Activated CD4-positive, alpha-beta T cell treated with anti-CD3 and anti-CD28 coated beads, Interleukin-2, amount 10 ng/mL, durations not matched to agents 7 days and 5 days (primary cell): ENCODE measurements at regions of chr1 and their contacts with region 1.

Region 1: DNA sequence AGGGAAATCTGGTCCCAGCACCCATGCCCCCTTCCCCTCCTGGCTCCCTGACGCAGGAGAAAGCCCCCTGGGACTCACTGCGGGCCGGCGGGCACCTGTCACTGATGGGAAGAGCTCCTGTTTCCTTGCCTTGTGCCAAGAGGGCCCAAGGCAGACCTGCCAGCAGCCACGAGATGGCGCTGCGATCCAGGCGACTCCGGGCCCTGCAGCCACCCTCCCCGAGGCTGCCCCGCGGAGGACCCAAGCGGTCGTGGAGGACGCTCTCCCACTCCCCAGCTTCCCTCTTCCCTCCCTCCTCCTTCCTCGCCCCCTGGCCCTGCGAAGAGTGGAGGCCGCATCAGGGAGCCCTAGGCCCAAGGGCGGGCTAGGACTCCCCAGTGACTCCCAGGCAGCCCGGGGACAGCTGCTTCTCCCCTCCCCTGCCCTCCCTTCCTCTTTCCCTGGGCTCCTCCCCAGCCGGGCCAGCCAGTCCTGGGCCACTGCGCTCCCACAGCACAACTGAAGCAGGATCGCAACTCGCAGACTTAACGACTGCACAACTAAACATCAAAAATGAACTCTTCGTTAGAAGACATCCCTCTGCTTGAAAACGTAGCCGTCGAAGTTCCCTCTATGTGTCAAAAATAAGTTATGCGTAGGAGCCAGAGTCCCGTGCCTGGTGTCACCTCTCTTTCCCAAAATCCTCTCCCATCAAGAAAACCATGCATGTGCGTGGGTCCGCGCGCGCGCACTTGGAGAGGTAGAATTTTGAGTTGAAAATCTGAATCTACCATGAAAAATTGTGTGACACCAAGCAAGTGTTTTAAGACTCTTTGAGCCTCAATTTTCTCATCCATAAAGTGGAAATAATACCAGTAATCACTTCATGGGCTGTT is 34.2 kb downstream of the BATF3 start:
- DNase-seq: peak; percentile 80
- H3K4me3 Mint-ChIP-seq: peak overlapping the region; percentile 74
- H3K27ac Mint-ChIP-seq: peak overlapping the region; percentile 74
- H3K4me1 Mint-ChIP-seq: peaks cover 22% of the 10 kb centered on the region
- H3K27me3 Mint-ChIP-seq: peaks cover 20% of the 10 kb centered on the region

Region 2: DNA sequence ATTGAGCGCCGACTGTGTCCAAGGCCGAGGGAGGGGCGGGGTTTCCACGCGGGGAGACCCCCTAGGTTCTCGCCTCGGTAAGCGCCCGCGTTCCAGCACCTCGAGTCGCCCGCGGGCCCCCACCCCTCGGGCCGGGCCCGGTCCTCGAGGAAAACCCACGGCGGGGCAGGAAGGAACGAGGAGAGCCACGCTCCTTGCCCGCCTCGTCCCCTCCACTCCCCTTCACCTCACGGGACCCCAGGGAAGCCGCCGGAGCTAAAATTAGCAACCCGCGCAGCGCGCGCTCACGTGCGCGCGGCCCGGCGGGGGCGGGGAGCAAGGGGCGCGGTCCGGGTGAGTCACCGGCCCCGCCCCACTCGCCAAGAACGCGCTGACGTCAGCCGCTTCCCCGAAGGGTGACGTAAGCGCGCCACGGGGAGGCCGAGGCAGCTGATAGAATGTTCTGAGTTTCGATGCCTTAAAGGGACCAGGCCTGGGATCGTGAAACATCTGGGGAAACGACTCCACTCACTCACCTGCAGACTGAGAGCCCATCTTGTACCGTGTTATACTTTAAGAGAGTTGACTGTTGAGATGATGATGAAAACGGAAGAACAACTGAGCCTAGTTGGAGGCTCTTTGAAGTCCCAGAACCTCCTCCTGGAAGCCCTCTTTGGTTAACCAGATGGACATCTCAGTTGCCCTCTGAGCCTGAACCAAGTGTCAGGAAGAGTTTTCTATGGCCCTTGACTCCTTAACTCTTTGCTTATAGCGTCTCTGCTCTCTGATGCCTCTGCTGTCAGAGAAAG is 106.6 kb before region 1 on chr1:
- CTCF ChIA-PET with region 1: no interaction called
- POLR2A ChIA-PET with region 1: no interaction called
- DNase-seq: peak; percentile 94
- H3K4me3 Mint-ChIP-seq: peak overlapping the region; percentile 61
- H3K27ac Mint-ChIP-seq: peak overlapping the region; percentile 92
- H3K4me1 Mint-ChIP-seq: peaks cover 7% of the 10 kb centered on the region
- H3K27me3 Mint-ChIP-seq: peaks cover 32% of the 10 kb centered on the region

Region 3: DNA sequence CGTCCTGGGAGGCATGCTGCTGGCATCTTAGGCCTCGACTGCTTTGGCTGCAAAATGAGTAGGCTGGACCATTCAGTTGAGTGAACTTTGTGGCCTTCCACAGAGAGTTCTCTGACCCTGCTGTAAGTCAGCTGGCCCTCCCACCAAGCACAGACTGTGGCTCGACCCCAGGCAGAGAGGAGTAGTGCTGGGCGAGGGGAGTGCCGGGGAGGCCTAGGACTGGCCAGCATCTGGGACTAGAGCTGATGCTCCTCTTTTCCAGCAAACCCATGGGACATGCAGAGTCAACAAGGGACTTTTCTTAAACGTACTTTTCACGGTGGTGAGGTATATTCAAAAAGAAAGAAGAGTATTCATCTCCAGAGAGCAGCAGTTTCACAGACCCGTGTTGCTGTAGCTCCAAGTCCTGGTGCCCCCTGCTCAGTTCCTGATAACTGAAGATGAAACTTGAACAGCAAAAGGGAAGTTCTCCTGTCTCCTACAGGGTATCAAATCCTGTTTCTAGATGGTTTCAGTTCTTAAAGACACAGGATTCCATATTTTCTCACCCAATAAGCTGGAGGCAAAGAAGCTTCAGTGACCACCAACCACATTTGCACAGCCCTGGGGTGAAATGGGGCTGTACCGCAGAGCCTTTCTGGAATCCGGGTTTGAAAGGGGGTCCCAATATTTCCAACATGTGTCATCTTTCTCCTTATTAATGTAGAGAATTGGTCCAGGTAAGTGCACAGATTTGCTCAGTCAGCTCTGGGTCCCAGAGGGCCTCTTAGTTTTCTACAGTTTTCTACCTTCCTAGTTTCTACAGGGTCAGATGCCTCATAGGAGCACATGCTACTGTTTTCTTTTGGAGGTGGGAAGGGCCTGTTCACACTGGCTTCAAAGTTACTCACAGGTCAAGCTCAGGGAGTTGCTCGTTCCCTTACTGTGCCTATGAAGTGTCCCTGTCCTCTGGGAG is 13.3 kb after region 1 on chr1:
- CTCF ChIA-PET with region 1: interaction called, 45 read pairs
- POLR2A ChIA-PET with region 1: no interaction called
- DNase-seq: no peak
- H3K4me3 Mint-ChIP-seq: no peak overlapping the region
- H3K27ac Mint-ChIP-seq: peak overlapping the region; percentile 46
- H3K4me1 Mint-ChIP-seq: peaks cover 43% of the 10 kb centered on the region
- H3K27me3 Mint-ChIP-seq: peaks cover 4% of the 10 kb centered on the region

Region 4: GRCh38 chr1:212688341-212689047 is 23.0 kb after region 1 on chr1:
- CTCF ChIA-PET with region 1: interaction called, 10 read pairs
- POLR2A ChIA-PET with region 1: no interaction called
- DNase-seq: no peak
- H3K4me3 Mint-ChIP-seq: no peak overlapping the region
- H3K27ac Mint-ChIP-seq: no peak overlapping the region
- H3K4me1 Mint-ChIP-seq: peaks cover 27% of the 10 kb centered on the region
- H3K27me3 Mint-ChIP-seq: no peaks in the 10 kb centered on the region

Region 5: GRCh38 chr1:212743901-212744475 is 78.5 kb after region 1 on chr1:
- CTCF ChIA-PET with region 1: interaction called, 10 read pairs
- POLR2A ChIA-PET with region 1: no interaction called
- DNase-seq: peak; percentile 25
- H3K4me3 Mint-ChIP-seq: no peak overlapping the region
- H3K27ac Mint-ChIP-seq: peak overlapping the region; percentile 72
- H3K4me1 Mint-ChIP-seq: peaks cover 28% of the 10 kb centered on the region
- H3K27me3 Mint-ChIP-seq: no peaks in the 10 kb centered on the region

Region 6: GRCh38 chr1:212749821-212750535 is 84.5 kb after region 1 on chr1:
- CTCF ChIA-PET with region 1: interaction called, 10 read pairs
- POLR2A ChIA-PET with region 1: no interaction called
- DNase-seq: no peak
- H3K4me3 Mint-ChIP-seq: no peak overlapping the region
- H3K27ac Mint-ChIP-seq: no peak overlapping the region
- H3K4me1 Mint-ChIP-seq: peaks cover 42% of the 10 kb centered on the region
- H3K27me3 Mint-ChIP-seq: no peaks in the 10 kb centered on the region

Region 7: GRCh38 chr1:212760126-212760823 is 94.8 kb after region 1 on chr1:
- CTCF ChIA-PET with region 1: interaction called, 15 read pairs
- POLR2A ChIA-PET with region 1: no interaction called
- DNase-seq: peak; percentile 56
- H3K4me3 Mint-ChIP-seq: no peak overlapping the region
- H3K27ac Mint-ChIP-seq: no peak overlapping the region
- H3K4me1 Mint-ChIP-seq: peaks cover 16% of the 10 kb centered on the region
- H3K27me3 Mint-ChIP-seq: no peaks in the 10 kb centered on the region

Region 8: DNA sequence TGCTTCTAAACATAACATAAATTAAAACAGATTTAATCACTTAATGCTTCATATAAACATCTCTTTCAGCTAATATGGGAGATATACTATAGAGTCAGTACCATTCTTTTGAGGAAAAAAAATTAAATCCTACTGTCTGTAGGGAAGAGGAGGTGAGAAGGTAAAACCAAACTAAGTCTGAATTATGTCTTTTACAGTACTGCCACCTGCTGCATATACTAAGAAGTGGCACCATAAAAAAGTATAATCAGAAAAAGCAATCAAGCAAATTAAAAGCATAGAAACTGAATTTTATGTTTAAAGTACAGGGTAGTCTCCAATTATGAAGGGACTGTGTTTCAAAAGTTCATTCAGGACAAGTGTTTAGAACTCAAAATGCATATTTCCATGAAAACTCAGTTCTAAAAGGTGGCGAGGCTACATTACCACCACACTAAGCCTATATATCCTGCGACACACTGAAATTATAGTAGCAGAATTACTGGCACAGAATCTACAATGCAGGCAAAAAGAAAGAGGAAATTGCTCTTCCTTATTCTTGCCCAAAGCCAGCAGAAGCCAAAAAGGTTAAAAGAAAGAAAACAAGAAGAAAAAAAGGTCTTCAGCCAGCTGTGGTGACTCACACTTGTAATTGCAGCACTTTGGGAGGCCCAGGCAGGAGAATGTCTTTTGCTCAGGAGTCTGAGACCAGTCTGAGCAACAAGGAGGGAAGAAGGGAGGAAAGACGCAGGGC is 117.1 kb after region 1 on chr1:
- CTCF ChIA-PET with region 1: interaction called, 19 read pairs
- POLR2A ChIA-PET with region 1: no interaction called
- DNase-seq: no peak
- H3K4me3 Mint-ChIP-seq: no peak overlapping the region
- H3K27ac Mint-ChIP-seq: no peak overlapping the region
- H3K4me1 Mint-ChIP-seq: peaks cover 13% of the 10 kb centered on the region
- H3K27me3 Mint-ChIP-seq: no peaks in the 10 kb centered on the region